ENCODE measurements at regions of chr11 and their contacts with region 1.

Region 1: DNA sequence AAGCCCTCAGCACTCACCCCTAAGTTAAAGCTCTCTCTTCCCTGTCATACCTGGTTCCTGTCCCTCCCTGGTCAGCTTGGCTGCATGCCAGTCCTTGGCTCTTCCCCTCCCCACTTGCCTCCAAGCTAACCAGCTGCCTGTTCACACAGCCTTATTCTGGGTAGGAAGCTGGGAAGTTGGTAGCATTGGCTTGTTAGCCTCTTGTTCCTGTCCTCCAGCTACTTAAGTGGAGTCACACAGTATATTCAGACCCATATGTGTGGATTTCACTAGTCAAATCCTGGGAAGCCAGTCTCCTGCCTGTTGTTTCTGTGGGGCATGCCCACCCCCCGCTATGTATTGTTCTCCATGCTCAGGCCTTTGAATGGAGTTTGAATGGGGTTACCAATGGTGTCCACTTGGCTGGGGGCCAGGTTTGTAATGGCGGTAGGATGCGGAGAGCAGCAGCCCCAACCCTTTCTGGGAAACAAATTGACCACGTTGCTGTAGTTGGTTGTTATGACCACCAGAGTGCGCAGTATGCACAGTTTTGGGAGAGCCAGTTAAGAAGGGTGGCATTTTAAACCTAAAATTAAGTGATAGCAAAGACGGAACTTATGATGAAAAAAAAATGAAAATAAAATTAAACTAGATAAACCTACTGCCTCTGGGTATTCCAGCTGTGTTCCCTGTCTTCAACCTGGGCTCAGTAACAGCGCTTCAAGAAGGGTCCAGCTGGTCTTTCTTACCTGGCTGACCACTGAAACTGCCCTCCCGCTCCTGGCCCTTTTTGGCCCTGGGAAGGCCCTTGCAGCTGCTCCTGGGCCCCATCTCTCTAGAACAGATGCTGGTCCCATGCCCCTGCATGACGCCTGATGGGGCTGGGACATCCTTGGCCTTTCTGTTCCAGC is 10.7 kb upstream of the RPS3 start:
- DNase-seq: peak; percentile 92
- H3K4me3 ChIP-seq: no peak overlapping the region
- H3K27ac ChIP-seq: no peak overlapping the region
- H3K4me1 ChIP-seq: peaks cover 17% of the 10 kb centered on the region
- H3K27me3 ChIP-seq: no peaks in the 10 kb centered on the region
- CTCF ChIP-seq: peak; percentile 63 to 72
- POLR2A ChIP-seq: no peak

Region 2: DNA sequence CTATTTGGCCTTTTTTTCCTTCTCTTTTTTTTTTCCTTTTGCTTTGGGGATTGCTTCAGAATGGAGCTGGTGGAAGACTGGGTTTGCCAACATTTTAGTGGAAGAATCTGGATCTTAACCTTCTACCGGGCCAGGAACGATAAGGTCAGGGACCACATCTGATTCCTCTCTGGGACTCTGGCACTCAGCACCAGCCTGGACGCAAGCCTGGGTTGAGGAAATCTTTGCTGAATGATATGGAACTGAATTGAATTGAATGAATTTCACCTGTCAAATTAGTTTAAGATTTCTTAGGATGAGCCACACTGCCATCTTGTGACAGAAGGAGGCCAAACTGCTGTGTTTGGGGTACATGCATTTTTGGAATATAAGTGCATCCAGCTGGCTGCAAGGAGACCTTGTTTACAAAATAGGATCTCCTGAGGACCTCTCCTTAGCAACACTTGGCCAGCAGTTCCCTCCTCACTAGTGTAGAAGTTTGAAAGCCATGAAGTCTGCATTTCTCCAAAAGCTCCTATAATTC is 117.7 kb before region 1 on chr11:
- CTCF ChIA-PET with region 1: interaction called, 15 read pairs
- POLR2A ChIA-PET with region 1: no interaction called
- dilution Hi-C with region 1: no loop called
- intact Hi-C with region 1: loop called (anchors 1 kb)
- DNase-seq: peak; percentile 23
- H3K4me3 ChIP-seq: no peak overlapping the region
- H3K27ac ChIP-seq: no peak overlapping the region
- H3K4me1 ChIP-seq: peaks cover 9% of the 10 kb centered on the region
- H3K27me3 ChIP-seq: no peaks in the 10 kb centered on the region
- CTCF ChIP-seq: peak in 1 of 2 donors; percentile 12
- POLR2A ChIP-seq: no peak

Region 3: GRCh38 chr11:75328426-75329277 is 60.0 kb before region 1 on chr11:
- CTCF ChIA-PET with region 1: interaction called, 76 read pairs
- POLR2A ChIA-PET with region 1: no interaction called
- dilution Hi-C with region 1: no loop called
- intact Hi-C with region 1: loop called (anchors 1 kb)
- DNase-seq: peak; percentile 84
- H3K4me3 ChIP-seq: no peak overlapping the region
- H3K27ac ChIP-seq: no peak overlapping the region
- H3K4me1 ChIP-seq: peaks cover 33% of the 10 kb centered on the region
- H3K27me3 ChIP-seq: no peaks in the 10 kb centered on the region
- CTCF ChIP-seq: peak; percentile 51 to 61
- POLR2A ChIP-seq: no peak

Region 4: GRCh38 chr11:75351791-75352587 is 36.6 kb before region 1 on chr11:
- CTCF ChIA-PET with region 1: interaction called, 11 read pairs
- POLR2A ChIA-PET with region 1: no interaction called
- dilution Hi-C with region 1: no loop called
- intact Hi-C with region 1: loop called (anchors 1 kb)
- DNase-seq: no peak
- H3K4me3 ChIP-seq: peak overlapping the region in 2 of 3 experiments; percentile 33 to 85
- H3K27ac ChIP-seq: no peak overlapping the region
- H3K4me1 ChIP-seq: peaks cover 45% of the 10 kb centered on the region
- H3K27me3 ChIP-seq: no peaks in the 10 kb centered on the region
- CTCF ChIP-seq: no peak
- POLR2A ChIP-seq: peak; percentile 20

Region 5: GRCh38 chr11:75406338-75406777 is 17.7 kb after region 1 on chr11:
- CTCF ChIA-PET with region 1: interaction called, 26 read pairs
- POLR2A ChIA-PET with region 1: no interaction called
- dilution Hi-C with region 1: no loop called
- intact Hi-C with region 1: no loop called
- DNase-seq: peak; percentile 94
- H3K4me3 ChIP-seq: no peak overlapping the region
- H3K27ac ChIP-seq: no peak overlapping the region
- H3K4me1 ChIP-seq: peaks cover 56% of the 10 kb centered on the region
- H3K27me3 ChIP-seq: no peaks in the 10 kb centered on the region
- CTCF ChIP-seq: no peak
- POLR2A ChIP-seq: peak; percentile 77

Region 6: DNA sequence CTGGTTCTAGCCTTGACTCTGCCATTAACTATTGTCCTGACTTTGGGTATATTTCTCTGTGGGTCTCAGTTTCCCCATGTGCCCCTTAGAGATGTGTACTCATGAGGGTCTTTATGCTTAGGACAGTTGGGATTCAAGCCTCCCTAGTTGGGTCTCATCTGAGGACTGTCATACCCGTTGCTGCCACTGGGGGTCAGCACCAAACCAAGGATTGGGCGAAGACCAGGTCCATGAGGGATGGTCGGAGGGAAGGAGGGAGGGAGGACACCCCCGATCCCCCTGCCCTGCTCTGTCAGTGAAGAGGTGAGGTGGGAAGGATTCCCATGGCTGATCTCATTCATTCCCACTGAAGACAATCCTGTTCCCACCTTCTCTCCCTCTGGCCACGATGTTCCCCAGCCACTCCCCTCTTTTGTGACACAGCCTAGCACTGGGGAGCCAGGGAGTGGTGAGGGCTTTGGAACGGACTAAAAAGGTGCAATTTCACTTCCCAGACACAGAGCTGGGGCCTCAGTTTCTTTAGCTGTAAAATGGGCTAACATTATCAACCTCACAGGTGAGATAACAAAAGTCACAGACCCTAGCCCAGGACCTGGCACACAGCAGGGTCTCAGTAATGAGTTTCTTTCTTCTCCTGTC is 56.8 kb after region 1 on chr11:
- CTCF ChIA-PET with region 1: interaction called, 8 read pairs
- POLR2A ChIA-PET with region 1: no interaction called
- dilution Hi-C with region 1: no loop called
- intact Hi-C with region 1: loop called (anchors 1 kb)
- DNase-seq: peak; percentile 70
- H3K4me3 ChIP-seq: no peak overlapping the region
- H3K27ac ChIP-seq: no peak overlapping the region
- H3K4me1 ChIP-seq: no peaks in the 10 kb centered on the region
- H3K27me3 ChIP-seq: no peaks in the 10 kb centered on the region
- CTCF ChIP-seq: peak; percentile 85 to 92
- POLR2A ChIP-seq: no peak